AG04450 (cell line): ENCODE measurements at regions of chr17 and their contacts with region 1.

Region 1: DNA sequence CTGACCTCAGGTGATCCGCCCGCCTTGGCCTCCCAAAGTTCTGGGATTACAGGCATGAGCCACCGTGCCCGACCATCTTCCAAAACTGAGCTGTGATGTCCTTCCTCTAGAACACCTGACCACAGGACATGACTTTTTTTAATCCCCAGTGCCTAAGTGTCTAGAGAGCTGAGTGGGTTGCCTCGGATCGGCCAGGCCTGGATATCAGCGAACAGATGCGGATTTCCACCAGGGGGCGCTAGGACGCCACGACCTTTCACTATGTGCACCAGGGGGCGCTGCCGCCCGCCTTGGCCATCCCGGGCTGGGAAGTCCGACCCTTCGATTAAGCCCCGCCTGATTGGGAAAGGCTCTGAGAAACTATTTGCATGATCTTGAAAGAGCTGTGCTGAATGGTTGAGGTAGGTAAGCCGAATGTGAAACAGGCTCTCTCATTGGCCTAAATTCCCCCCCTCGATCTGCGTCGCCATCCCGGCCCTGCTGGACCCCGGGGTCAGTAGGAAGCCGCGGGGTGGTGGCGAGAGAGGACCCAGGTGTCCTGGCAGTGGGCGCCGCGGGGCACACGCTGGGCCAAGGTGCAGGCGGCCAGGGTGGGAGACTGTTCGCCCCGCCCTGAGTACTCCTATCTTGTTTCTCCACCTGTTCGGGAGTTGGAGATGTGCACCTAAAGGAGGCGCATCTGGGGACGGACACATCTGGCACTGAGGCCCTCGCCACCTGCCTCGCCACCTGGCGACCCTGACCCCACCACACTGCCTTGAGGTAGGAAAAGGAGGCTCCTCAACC is at the start of gene ACBD4:
- DNase-seq: peak; percentile 95
- H3K4me3 ChIP-seq: peak within 1 kb of the TSS; percentile 76
- H3K27ac ChIP-seq: peak within 1 kb of the TSS; percentile 31
- H3K27me3 ChIP-seq: no peaks in the 10 kb centered on the region
- CTCF ChIP-seq: peak; percentile 100
- polyA plus RNA-seq, gene ACBD4: 4.0 and 4.7 TPM in 2 replicates

Region 2: GRCh38 chr17:44110823-44111633 is 1024.4 kb before region 1 on chr17:
- CTCF ChIA-PET with region 1: no interaction called
- POLR2A ChIA-PET with region 1: no interaction called
- DNase-seq: no peak
- H3K4me3 ChIP-seq: peak overlapping the region; percentile 57
- H3K27ac ChIP-seq: peak overlapping the region; percentile 47
- H3K27me3 ChIP-seq: no peaks in the 10 kb centered on the region
- CTCF ChIP-seq: no peak; the same call in 1 of the 2 replicates

Region 3: GRCh38 chr17:44832805-44833204 is 302.6 kb before region 1 on chr17:
- CTCF ChIA-PET with region 1: no interaction called
- POLR2A ChIA-PET with region 1: no interaction called
- DNase-seq: no peak
- H3K4me3 ChIP-seq: no peak overlapping the region
- H3K27ac ChIP-seq: no peak overlapping the region
- H3K27me3 ChIP-seq: no peaks in the 10 kb centered on the region
- CTCF ChIP-seq: peak; percentile 35

Region 4: DNA sequence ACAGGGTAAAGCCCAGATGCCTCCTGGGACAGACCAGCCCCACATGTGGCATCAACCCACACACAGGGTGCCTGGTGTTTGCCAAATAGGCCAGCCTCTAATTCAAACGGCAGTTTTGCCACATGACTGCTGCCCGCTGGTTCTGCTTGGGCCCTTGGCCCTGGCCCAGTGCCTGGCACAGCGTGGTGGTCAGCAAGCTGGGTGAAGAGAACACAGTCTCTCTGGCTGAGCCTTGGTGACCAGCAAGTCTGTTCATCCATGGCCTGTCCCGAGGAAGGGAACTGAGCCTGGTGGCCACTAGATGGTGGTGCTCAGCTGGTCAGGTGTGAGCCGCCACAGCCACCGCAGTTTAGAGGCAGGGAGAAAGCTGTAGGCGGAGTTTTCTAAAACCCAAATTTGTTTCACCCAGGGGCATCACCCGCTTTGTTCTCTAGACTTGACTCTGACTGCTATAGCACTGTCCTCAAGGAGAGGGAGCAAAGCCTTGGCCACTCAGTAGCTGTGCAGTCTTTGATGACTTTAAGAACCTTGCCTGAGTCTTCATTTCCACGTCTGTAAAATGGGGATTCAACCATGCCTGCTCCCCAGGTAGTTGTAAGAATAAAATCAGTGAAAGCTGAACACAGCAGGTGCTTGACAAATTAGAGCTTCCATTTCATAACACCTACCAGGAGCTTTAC is 215.4 kb before region 1 on chr17:
- CTCF ChIA-PET with region 1: interaction called, 14 read pairs
- POLR2A ChIA-PET with region 1: no interaction called
- DNase-seq: peak; percentile 55
- H3K4me3 ChIP-seq: no peak overlapping the region
- H3K27ac ChIP-seq: no peak overlapping the region
- H3K27me3 ChIP-seq: no peaks in the 10 kb centered on the region
- CTCF ChIP-seq: peak; percentile 87

Region 5: DNA sequence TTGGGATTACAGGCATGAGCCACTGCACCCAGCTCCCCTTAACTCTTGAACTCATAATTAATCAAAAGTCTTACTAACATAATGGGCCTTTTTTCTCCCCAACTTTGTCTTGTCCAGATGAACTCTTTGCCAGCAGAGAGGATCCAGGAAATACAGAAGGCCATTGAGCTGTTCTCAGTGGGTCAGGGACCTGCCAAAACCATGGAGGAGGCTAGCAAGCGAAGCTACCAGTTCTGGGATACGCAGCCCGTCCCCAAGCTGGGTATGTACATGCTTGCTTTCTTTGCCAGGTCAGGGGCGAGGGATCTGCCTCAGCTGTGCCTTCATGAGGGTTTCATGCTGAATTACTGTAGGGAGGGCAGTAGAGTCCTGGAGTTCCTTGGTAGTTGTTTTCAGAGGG is 49.0 kb before region 1 on chr17:
- CTCF ChIA-PET with region 1: interaction called, 26 read pairs
- POLR2A ChIA-PET with region 1: no interaction called
- DNase-seq: no peak
- H3K4me3 ChIP-seq: no peak overlapping the region
- H3K27ac ChIP-seq: no peak overlapping the region
- H3K27me3 ChIP-seq: no peaks in the 10 kb centered on the region
- CTCF ChIP-seq: no peak

Region 6: DNA sequence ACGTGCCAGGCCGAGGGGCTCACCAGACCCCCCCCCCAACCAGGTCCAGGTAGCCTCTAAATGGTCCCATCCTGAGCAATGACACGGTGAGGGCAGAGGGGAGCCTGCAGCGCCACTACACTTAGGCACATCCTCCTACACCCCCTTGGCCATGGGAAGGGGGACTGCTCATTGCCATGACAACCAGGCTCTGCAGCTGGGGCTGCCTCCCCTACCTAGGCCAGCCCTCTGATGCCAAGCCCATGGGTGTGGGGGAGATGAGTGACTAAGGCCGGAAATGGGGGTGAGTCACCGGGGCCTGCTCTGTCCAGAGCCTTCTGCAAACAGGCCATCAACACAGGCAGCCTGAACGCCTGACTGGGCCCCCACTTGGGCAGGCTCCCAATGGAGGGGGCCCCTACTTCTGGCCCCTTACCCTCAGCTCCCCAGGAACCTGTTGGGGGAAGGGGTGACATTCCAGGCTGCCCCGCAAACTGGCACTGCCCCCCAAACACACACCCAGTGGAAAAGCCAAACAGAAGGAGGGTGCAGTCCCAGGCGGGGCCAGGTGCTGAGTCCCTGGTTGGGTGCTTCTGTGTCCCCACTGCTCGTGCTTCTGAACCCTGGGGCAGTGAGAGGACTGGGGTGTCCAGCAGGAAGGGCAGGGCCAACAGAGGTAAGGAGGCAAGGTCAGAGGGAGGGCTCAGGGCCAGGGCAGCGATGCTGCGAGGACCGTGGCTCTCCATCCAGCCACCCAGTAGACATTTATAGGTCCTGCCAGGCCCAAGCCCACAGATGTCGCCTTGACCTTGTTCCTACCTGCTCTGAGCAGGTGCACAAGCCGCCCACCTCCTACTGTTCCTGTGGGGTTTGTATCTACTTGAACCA is 11.2 kb before region 1 on chr17:
- CTCF ChIA-PET with region 1: interaction called, 52 read pairs
- POLR2A ChIA-PET with region 1: interaction called, 7 read pairs
- DNase-seq: peak; percentile 71
- H3K4me3 ChIP-seq: no peak overlapping the region
- H3K27ac ChIP-seq: peak overlapping the region; percentile 83
- H3K27me3 ChIP-seq: no peaks in the 10 kb centered on the region
- CTCF ChIP-seq: no peak

Region 7: GRCh38 chr17:45184144-45184543 is 48.8 kb after region 1 on chr17:
- CTCF ChIA-PET with region 1: interaction called, 17 read pairs
- POLR2A ChIA-PET with region 1: interaction called, 6 read pairs
- DNase-seq: no peak
- H3K4me3 ChIP-seq: no peak overlapping the region
- H3K27ac ChIP-seq: no peak overlapping the region
- H3K27me3 ChIP-seq: no peaks in the 10 kb centered on the region
- CTCF ChIP-seq: no peak

Region 8: DNA sequence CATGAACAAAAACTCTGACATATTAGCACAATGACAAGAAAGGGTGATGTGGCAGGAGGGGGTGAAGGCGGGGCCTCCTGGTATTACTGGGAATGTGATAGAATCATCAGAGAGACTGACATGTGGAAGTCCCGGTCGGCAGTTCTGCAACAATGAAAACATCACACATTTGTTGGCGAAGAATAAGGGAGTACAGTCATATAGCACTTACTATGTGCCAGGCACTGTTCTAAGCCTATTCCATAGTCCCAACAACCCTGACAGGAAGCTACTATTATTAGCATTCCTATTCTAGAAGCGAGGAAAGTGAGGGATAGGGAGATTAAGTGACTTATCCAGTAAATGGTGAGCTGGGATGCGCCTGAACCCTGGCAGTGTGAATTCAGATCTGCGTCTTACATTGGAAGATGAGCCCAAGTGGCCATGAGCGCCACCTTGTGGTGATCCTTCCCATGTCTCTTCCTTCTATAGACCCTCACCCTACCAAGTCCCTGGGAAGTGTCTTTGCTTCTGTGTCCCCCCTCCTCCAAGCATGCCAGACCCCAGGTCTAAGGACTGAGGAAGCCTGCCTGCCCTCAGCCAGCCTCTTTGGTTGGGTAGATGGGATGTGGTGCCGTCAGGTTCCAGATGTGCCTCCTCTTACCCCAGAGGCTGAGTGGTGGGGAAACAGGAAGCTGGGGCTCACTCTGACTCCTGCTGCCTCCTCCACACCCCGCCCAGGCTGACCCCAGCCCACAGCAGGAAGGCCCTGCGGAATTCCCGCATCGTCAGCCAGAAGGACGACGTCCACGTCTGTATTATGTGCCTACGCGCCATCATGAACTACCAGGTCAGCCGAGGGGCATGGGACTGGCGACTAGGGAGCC is 100.3 kb after region 1 on chr17:
- CTCF ChIA-PET with region 1: interaction called, 31 read pairs
- POLR2A ChIA-PET with region 1: no interaction called
- DNase-seq: peak; percentile 49
- H3K4me3 ChIP-seq: no peak overlapping the region
- H3K27ac ChIP-seq: no peak overlapping the region
- H3K27me3 ChIP-seq: peaks cover 10% of the 10 kb centered on the region
- CTCF ChIP-seq: peak; percentile 81